Activated T-helper 2 cell treated with anti-CD3 and anti-CD28 coated beads, Interferon-gamma antibody, Interleukin-2, Interleukin-4, amounts not matched to agents 10 μg/mL and 5 μg/mL and 100 μg/mL, durations not matched to agents 14 hours and 24 hours and 36 hours (primary cell): ENCODE measurements at regions of chr2 and their contacts with region 1.

Region 1: GRCh38 chr2:118309946-118310680 is 221.8 kb downstream of the INSIG2 start:
- DNase-seq: peak; percentile 71
- H3K4me3 Mint-ChIP-seq: peak overlapping the region; percentile 79
- H3K27ac Mint-ChIP-seq: peak overlapping the region; percentile 93
- H3K4me1 Mint-ChIP-seq: peaks cover 4% of the 10 kb centered on the region
- H3K27me3 Mint-ChIP-seq: peaks cover 29% of the 10 kb centered on the region

Region 2: GRCh38 chr2:117814417-117815264 is 495.5 kb before region 1 on chr2 and contains the start of gene DDX18:
- intact Hi-C with region 1: loop called (anchors 10 kb)
- DNase-seq: peak; percentile 96
- H3K4me3 Mint-ChIP-seq: peak within 1 kb of the TSS; percentile 90
- H3K27ac Mint-ChIP-seq: peak within 1 kb of the TSS; percentile 92
- H3K4me1 Mint-ChIP-seq: peaks cover 21% of the 10 kb centered on the region
- H3K27me3 Mint-ChIP-seq: no peaks in the 10 kb centered on the region
- total RNA-seq, gene DDX18: 128 and 131 TPM in 2 replicates

Region 3: GRCh38 chr2:118080465-118080864 is 229.6 kb before region 1 on chr2:
- intact Hi-C with region 1: no loop called
- DNase-seq: no peak
- H3K4me3 Mint-ChIP-seq: no peak overlapping the region
- H3K27ac Mint-ChIP-seq: no peak overlapping the region
- H3K4me1 Mint-ChIP-seq: no peaks in the 10 kb centered on the region
- H3K27me3 Mint-ChIP-seq: peaks cover 57% of the 10 kb centered on the region

Region 4: GRCh38 chr2:118221666-118222594 is 88.2 kb before region 1 on chr2:
- intact Hi-C with region 1: loop called (anchors 1 kb)
- DNase-seq: no peak
- H3K4me3 Mint-ChIP-seq: no peak overlapping the region
- H3K27ac Mint-ChIP-seq: no peak overlapping the region
- H3K4me1 Mint-ChIP-seq: peaks cover 19% of the 10 kb centered on the region
- H3K27me3 Mint-ChIP-seq: peaks cover 65% of the 10 kb centered on the region

Region 5: DNA sequence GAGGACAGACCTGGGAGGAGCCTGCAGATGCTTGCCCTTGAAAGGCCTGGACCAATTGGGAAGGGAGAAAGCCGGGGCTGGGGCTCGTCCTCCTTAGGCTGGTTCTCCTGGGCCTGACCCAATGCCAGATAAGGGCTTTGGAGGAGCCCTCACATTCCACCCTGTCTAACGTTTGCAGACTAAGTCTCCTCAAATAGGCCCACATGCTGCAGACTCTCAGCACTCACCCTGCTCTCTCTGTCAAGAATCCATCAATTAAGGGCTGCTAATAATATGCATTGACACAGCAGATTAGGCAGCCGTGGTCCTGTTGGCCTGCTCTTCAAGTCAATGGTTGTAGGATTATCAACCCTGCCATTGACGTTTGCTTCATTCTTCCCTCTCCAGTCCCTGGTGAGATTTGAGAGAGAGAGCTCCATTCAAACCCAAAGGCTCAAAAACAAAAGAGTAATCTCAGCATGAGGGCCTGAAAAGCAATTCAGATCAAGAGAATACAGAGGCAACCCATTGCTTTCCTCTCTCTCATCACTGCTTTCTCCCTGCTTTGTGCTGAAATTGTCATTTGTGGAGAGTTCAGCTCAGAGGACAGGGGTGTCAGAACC is 54.2 kb before region 1 on chr2:
- intact Hi-C with region 1: no loop called
- DNase-seq: no peak
- H3K4me3 Mint-ChIP-seq: no peak overlapping the region
- H3K27ac Mint-ChIP-seq: no peak overlapping the region
- H3K4me1 Mint-ChIP-seq: no peaks in the 10 kb centered on the region
- H3K27me3 Mint-ChIP-seq: peaks cover 22% of the 10 kb centered on the region

Region 6: GRCh38 chr2:118403658-118404451 is 93.7 kb after region 1 on chr2:
- intact Hi-C with region 1: loop called (anchors 5 kb)
- DNase-seq: no peak
- H3K4me3 Mint-ChIP-seq: no peak overlapping the region
- H3K27ac Mint-ChIP-seq: no peak overlapping the region
- H3K4me1 Mint-ChIP-seq: peaks cover 5% of the 10 kb centered on the region
- H3K27me3 Mint-ChIP-seq: peaks cover 15% of the 10 kb centered on the region

Region 7: GRCh38 chr2:119366649-119367471 is 1056.7 kb after region 1 on chr2 and contains the starts of genes C2orf76 and DBI:
- intact Hi-C with region 1: loop called (anchors 5 kb)
- DNase-seq: peak; percentile 93
- H3K4me3 Mint-ChIP-seq: peak within 1 kb of the TSS; percentile 100
- H3K27ac Mint-ChIP-seq: peak within 1 kb of the TSS; percentile 99
- H3K4me1 Mint-ChIP-seq: peaks cover 34% of the 10 kb centered on the region
- H3K27me3 Mint-ChIP-seq: no peaks in the 10 kb centered on the region
- total RNA-seq, gene C2orf76: 11.0 and 13.3 TPM in 2 replicates
- total RNA-seq, gene DBI: 162 and 168 TPM in 2 replicates